ENCODE measurements at regions of chr16 and their contacts with region 1.

Region 1: GRCh38 chr16:83449861-83450260 is 357.9 kb upstream of the HSBP1 start:
- DNase-seq: no peak
- ATAC-seq: no peak
- H3K4me3 ChIP-seq: no peak overlapping the region
- H3K27ac ChIP-seq: no peak overlapping the region
- H3K4me1 ChIP-seq: no peaks in the 10 kb centered on the region
- H3K27me3 ChIP-seq: no peaks in the 10 kb centered on the region
- CTCF ChIP-seq: no peak
- EP300 ChIP-seq: no peak
- POLR2A ChIP-seq: no peak
- RAD21 ChIP-seq: no peak

Region 2: GRCh38 chr16:83113317-83113716 is 336.5 kb before region 1 on chr16:
- CTCF ChIA-PET with region 1: interaction called, 4 read pairs
- POLR2A ChIA-PET with region 1: no interaction called
- RAD21 ChIA-PET with region 1: no interaction called
- SMC1A ChIA-PET with region 1: interaction called, 3 read pairs
- in situ Hi-C with region 1: no loop called
- intact Hi-C with region 1: loop called (anchors 5 kb)
- DNase-seq: no peak
- ATAC-seq: peak; percentile 60
- H3K4me3 ChIP-seq: no peak overlapping the region
- H3K27ac ChIP-seq: no peak overlapping the region
- H3K4me1 ChIP-seq: no peaks in the 10 kb centered on the region
- H3K27me3 ChIP-seq: no peaks in the 10 kb centered on the region
- CTCF ChIP-seq: peak in 2 of 3 experiments; percentile 10 to 24; a peak in 3 of 6 replicates
- EP300 ChIP-seq: no peak
- POLR2A ChIP-seq: no peak
- RAD21 ChIP-seq: no peak

Region 3: GRCh38 chr16:83409347-83409746 is 40.5 kb before region 1 on chr16:
- CTCF ChIA-PET with region 1: no interaction called
- POLR2A ChIA-PET with region 1: no interaction called
- RAD21 ChIA-PET with region 1: no interaction called
- SMC1A ChIA-PET with region 1: no interaction called
- in situ Hi-C with region 1: no loop called
- intact Hi-C with region 1: no loop called
- DNase-seq: no peak
- ATAC-seq: no peak
- H3K4me3 ChIP-seq: no peak overlapping the region
- H3K27ac ChIP-seq: no peak overlapping the region
- H3K4me1 ChIP-seq: no peaks in the 10 kb centered on the region
- H3K27me3 ChIP-seq: no peaks in the 10 kb centered on the region
- CTCF ChIP-seq: no peak
- EP300 ChIP-seq: no peak
- POLR2A ChIP-seq: no peak
- RAD21 ChIP-seq: no peak